ENCODE measurements at regions of chr11 and their contacts with region 1.

Region 1: GRCh38 chr11:105953886-105954285 is 68.2 kb downstream of the MSANTD4 start:
- DNase-seq: no peak
- H3K4me3 ChIP-seq: no peak overlapping the region
- H3K27ac ChIP-seq: no peak overlapping the region
- H3K4me1 ChIP-seq: no peaks in the 10 kb centered on the region
- H3K27me3 ChIP-seq: no peaks in the 10 kb centered on the region
- CTCF ChIP-seq: no peak

Region 2: DNA sequence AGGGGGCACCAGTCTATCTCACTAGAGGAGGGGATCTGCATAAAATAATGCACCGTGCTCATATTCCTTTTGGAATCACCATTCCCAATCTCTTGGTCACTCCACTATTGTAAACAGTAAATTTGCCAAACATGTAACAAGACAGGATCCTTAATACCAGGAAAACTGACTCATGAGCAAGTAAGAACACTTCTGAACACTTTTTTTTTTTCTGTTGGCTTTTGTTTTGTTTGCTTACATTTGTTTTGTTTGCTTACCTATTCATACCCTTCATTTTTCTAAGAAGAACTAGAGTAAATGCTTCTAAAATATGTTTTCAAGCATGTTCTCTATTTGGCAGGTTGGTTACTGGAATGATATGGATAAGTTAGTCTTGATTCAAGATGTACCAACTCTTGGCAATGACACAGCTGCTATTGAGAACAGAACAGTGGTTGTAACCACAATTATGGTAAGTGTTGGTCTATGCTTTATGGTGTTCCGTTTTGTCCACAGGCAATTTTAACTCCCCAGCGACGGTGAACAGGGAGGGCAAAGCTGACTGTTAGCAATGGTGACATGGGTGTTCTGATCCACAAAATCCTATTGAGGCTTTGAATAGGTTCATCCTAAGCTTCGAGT is 43.7 kb before region 1 on chr11:
- CTCF ChIA-PET with region 1: no interaction called
- dilution Hi-C with region 1: loop called (anchors 5 kb)
- in situ Hi-C with region 1: no loop called
- intact Hi-C with region 1: no loop called
- DNase-seq: peak; percentile 69
- H3K4me3 ChIP-seq: no peak overlapping the region
- H3K27ac ChIP-seq: no peak overlapping the region
- H3K4me1 ChIP-seq: peaks cover 10% of the 10 kb centered on the region
- H3K27me3 ChIP-seq: no peaks in the 10 kb centered on the region
- CTCF ChIP-seq: no peak

Measured in mammary epithelial cell (primary cell).